ENCODE measurements at regions of chr15 and their contacts with region 1.

Region 1: DNA sequence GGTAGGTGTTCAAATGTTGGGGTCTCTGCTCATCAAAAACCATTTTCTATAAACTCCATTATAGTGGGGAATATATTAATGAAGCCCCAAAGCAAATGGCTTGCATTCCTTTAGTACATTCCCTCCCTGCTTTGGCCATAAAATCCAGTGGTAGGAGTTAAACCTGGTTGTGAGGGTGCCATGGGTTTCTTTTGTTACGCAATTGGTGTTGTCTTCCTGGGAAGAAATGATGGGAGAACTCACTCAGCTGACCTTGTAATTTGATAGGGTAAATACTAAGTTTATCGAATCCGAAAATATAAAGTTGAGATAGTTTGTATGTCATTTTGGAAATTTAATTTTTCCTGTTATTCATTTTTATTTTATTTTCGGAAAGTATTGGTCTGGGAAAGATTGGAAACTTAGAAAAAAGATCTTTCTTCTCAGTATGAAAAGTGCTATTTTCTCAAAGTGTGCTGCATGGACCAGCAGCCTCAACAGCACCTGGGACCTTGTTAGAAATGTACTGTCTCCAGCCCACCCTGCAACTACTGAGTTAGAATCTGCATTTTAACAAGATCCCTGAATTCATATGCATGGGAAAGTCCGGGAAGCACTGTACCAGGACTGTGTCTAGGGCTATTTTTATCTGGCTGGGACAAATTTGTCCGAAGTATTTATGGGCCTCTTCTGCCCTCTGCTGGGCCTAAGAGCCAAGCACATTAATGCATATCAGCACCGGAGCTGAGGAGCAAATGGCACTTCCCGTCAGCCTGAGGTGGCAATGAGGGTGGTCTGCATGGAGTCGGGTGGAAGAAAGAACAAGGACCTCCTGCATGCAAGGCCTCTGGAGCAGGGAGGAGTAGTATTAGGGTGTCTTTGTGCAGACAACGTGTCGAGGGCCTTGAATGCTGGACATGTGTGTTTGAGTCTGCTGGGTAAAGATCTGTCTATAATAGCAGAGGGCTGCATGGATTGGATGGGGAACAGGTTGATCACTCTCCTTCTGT is 54.7 kb downstream of the FAM81A start:
- DNase-seq: peak; percentile 40
- ATAC-seq: peak; percentile 97
- H3K4me3 ChIP-seq: no peak overlapping the region
- H3K27ac ChIP-seq: no peak overlapping the region
- H3K4me1 ChIP-seq: peaks cover 6% of the 10 kb centered on the region
- H3K27me3 ChIP-seq: no peaks in the 10 kb centered on the region
- CTCF ChIP-seq: peak; percentile 75 to 92 (median 90)
- EP300 ChIP-seq: no peak
- POLR2A ChIP-seq: no peak
- RAD21 ChIP-seq: peak; percentile 94

Region 2: GRCh38 chr15:58227706-58228543 is 1264.8 kb before region 1 on chr15:
- CTCF ChIA-PET with region 1: interaction called, 3 read pairs
- POLR2A ChIA-PET with region 1: no interaction called
- RAD21 ChIA-PET with region 1: interaction called, 4 read pairs
- SMC1A ChIA-PET with region 1: no interaction called
- in situ Hi-C with region 1: loop called (anchors 10 kb)
- intact Hi-C with region 1: no loop called
- DNase-seq: peak; percentile 37
- ATAC-seq: peak; percentile 85
- H3K4me3 ChIP-seq: no peak overlapping the region
- H3K27ac ChIP-seq: no peak overlapping the region
- H3K4me1 ChIP-seq: no peaks in the 10 kb centered on the region
- H3K27me3 ChIP-seq: no peaks in the 10 kb centered on the region; a peak in 1 of 4 replicates
- CTCF ChIP-seq: peak; percentile 69 to 94 (median 85); a peak in 5 of 6 replicates
- EP300 ChIP-seq: no peak
- POLR2A ChIP-seq: no peak
- RAD21 ChIP-seq: peak; percentile 97

Region 3: DNA sequence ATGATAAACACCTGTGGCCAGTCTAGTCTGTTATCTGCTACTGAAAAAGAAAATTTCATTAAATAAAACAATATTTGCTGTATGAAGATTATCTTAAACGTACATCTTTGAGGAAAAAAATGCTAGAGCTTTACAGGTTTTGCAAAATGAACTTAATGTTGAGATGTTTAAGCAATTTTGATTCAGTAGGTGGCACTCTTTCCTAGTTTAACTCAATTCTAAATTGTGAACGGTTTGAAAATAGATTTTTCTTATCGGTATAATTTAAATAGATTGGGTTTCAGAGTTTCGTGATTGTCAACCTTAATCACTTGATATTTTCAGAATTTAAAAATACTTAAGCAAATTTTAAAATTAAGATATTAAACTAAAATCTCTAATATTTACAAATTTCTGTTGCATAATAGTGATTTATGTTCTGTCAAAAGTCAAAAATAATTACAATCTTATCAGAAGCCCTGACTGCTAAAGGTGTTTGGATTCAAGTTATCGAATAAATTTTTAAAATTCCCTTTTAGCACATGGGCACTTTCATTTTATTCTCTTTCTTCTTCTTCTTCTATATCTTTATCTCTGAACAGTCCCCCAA is 512.2 kb before region 1 on chr15:
- CTCF ChIA-PET with region 1: interaction called, 20 read pairs
- POLR2A ChIA-PET with region 1: interaction called, 5 read pairs
- RAD21 ChIA-PET with region 1: interaction called, 37 read pairs
- SMC1A ChIA-PET with region 1: interaction called, 23 read pairs
- in situ Hi-C with region 1: loop called (anchors 5 kb)
- intact Hi-C with region 1: loop called (anchors 2 kb)
- DNase-seq: no peak
- ATAC-seq: peak; percentile 39
- H3K4me3 ChIP-seq: peak overlapping the region; percentile 37
- H3K27ac ChIP-seq: peak overlapping the region; percentile 83; the same call in 1 of the 2 replicates
- H3K4me1 ChIP-seq: peaks cover 34% of the 10 kb centered on the region
- H3K27me3 ChIP-seq: no peaks in the 10 kb centered on the region
- CTCF ChIP-seq: peak; percentile 19 to 60 (median 43); a peak in 3 of 6 replicates
- EP300 ChIP-seq: no peak
- POLR2A ChIP-seq: no peak
- RAD21 ChIP-seq: peak; percentile 67

Region 4: DNA sequence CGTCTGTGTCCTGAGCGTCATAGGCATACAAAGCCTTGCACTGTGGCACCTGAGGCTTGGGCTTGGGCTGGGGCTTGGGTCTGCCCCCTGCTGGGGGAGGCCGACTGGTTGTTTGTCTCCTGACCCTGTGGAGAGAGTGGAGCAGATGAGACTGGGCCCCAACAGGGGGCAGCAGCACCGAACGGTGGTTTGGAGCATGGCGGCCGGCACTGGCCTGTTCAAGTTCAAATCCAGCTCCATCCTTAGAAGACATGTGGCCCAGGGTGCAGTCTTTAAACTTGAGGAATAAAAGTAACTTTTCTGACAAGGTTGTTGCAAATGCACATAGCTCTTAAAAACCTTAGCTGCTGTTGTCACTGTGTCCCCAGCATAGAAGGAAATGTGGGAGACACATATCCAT is 354.4 kb before region 1 on chr15:
- CTCF ChIA-PET with region 1: interaction called, 5 read pairs
- POLR2A ChIA-PET with region 1: no interaction called
- RAD21 ChIA-PET with region 1: no interaction called
- SMC1A ChIA-PET with region 1: interaction called, 3 read pairs
- in situ Hi-C with region 1: no loop called
- intact Hi-C with region 1: loop called (anchors 5 kb)
- DNase-seq: no peak
- ATAC-seq: peak; percentile 96
- H3K4me3 ChIP-seq: no peak overlapping the region
- H3K27ac ChIP-seq: no peak overlapping the region
- H3K4me1 ChIP-seq: peaks cover 6% of the 10 kb centered on the region
- H3K27me3 ChIP-seq: no peaks in the 10 kb centered on the region
- CTCF ChIP-seq: peak; percentile 77 to 85 (median 83)
- EP300 ChIP-seq: no peak
- POLR2A ChIP-seq: 0 out of 2 replicates have a peak, but pooled peaks have one; percentile 0
- RAD21 ChIP-seq: peak; percentile 44; the same call in 1 of the 2 replicates

Region 5: GRCh38 chr15:59160880-59161593 is 331.6 kb before region 1 on chr15:
- CTCF ChIA-PET with region 1: interaction called, 6 read pairs
- POLR2A ChIA-PET with region 1: no interaction called
- RAD21 ChIA-PET with region 1: interaction called, 8 read pairs
- SMC1A ChIA-PET with region 1: interaction called, 15 read pairs
- in situ Hi-C with region 1: no loop called
- intact Hi-C with region 1: loop called (anchors 5 kb)
- DNase-seq: no peak
- ATAC-seq: peak; percentile 74
- H3K4me3 ChIP-seq: no peak overlapping the region
- H3K27ac ChIP-seq: no peak overlapping the region
- H3K4me1 ChIP-seq: no peaks in the 10 kb centered on the region
- H3K27me3 ChIP-seq: no peaks in the 10 kb centered on the region
- CTCF ChIP-seq: peak; percentile 33 to 47 (median 43); a peak in 4 of 6 replicates
- EP300 ChIP-seq: no peak
- POLR2A ChIP-seq: no peak
- RAD21 ChIP-seq: peak; percentile 51

Region 6: GRCh38 chr15:59237119-59237855 is 255.4 kb before region 1 on chr15:
- CTCF ChIA-PET with region 1: interaction called, 4 read pairs
- POLR2A ChIA-PET with region 1: no interaction called
- RAD21 ChIA-PET with region 1: no interaction called
- SMC1A ChIA-PET with region 1: interaction called, 3 read pairs
- in situ Hi-C with region 1: no loop called
- intact Hi-C with region 1: loop called (anchors 2 kb)
- DNase-seq: peak; percentile 70
- ATAC-seq: peak; percentile 89
- H3K4me3 ChIP-seq: peak overlapping the region; percentile 35
- H3K27ac ChIP-seq: peak overlapping the region; percentile 78
- H3K4me1 ChIP-seq: peaks cover 11% of the 10 kb centered on the region
- H3K27me3 ChIP-seq: no peaks in the 10 kb centered on the region
- CTCF ChIP-seq: no peak
- EP300 ChIP-seq: peak; percentile 52 to 87; a peak in 2 of 4 replicates
- POLR2A ChIP-seq: no peak
- RAD21 ChIP-seq: no peak

Region 7: DNA sequence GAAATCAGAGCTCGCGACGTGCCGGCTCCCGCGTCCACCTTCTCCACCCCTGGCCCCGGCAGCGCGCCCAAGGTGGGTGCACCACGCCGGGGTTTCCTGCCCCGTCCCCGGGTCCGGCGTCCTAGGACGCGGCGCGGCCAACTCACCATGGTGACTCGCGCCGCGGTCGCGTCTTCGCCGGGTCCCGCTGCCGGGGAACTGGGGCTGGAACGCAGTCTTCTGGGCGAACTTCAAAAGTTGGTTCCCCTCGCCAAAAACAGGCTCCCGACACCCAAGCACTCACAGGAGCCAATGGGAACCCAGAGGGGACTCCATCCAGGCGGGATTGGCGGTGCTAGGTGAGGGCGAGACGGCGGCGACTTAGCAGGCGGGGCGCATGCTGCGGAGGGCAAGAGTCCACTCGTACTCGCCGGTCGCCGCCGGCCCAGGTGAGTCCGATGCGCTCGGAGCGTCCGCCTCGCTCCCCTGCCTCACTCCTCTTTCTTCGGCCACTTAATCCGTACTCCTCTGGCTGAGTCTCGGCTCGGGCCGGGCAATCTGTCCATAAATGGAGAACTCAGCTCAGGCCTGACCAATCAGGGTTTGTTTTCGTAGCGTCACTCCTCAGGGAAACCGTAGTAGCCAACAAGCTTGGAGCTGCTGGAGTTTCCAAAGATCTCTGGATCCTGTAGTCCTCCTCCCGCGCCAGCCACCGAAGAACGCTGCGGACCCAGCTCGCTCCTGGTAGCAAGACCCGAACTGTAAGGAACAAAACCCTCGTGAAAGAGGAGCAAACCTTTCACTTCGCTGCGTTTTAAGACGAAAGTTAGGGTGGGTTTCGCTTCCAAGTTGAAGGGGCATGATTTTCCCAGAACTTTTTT is 120.1 kb before region 1 on chr15 and contains the start of gene MYO1E:
- CTCF ChIA-PET with region 1: interaction called, 5 read pairs
- POLR2A ChIA-PET with region 1: no interaction called
- RAD21 ChIA-PET with region 1: interaction called, 6 read pairs
- SMC1A ChIA-PET with region 1: interaction called, 4 read pairs
- in situ Hi-C with region 1: loop called (anchors 5 kb)
- intact Hi-C with region 1: loop called (anchors 2 kb)
- DNase-seq: peak; percentile 72
- ATAC-seq: peak; percentile 76
- H3K4me3 ChIP-seq: peak within 1 kb of the TSS; percentile 75
- H3K27ac ChIP-seq: peak within 1 kb of the TSS; percentile 95
- H3K4me1 ChIP-seq: peaks cover 3% of the 10 kb centered on the region
- H3K27me3 ChIP-seq: no peaks in the 10 kb centered on the region
- CTCF ChIP-seq: no peak
- EP300 ChIP-seq: no peak
- POLR2A ChIP-seq: peak; percentile 88
- RAD21 ChIP-seq: no peak
- polyA plus RNA-seq, gene MYO1E: 10.3 to 27.5 TPM

Region 8: GRCh38 chr15:59553879-59554735 is 61.4 kb after region 1 on chr15:
- CTCF ChIA-PET with region 1: no interaction called
- POLR2A ChIA-PET with region 1: no interaction called
- RAD21 ChIA-PET with region 1: no interaction called
- SMC1A ChIA-PET with region 1: no interaction called
- in situ Hi-C with region 1: no loop called
- intact Hi-C with region 1: no loop called
- DNase-seq: no peak
- ATAC-seq: no peak
- H3K4me3 ChIP-seq: no peak overlapping the region
- H3K27ac ChIP-seq: no peak overlapping the region
- H3K4me1 ChIP-seq: no peaks in the 10 kb centered on the region
- H3K27me3 ChIP-seq: no peaks in the 10 kb centered on the region
- CTCF ChIP-seq: no peak
- EP300 ChIP-seq: no peak
- POLR2A ChIP-seq: no peak
- RAD21 ChIP-seq: no peak